ENCODE measurements at regions of chr9 and their contacts with region 1.

Region 1: DNA sequence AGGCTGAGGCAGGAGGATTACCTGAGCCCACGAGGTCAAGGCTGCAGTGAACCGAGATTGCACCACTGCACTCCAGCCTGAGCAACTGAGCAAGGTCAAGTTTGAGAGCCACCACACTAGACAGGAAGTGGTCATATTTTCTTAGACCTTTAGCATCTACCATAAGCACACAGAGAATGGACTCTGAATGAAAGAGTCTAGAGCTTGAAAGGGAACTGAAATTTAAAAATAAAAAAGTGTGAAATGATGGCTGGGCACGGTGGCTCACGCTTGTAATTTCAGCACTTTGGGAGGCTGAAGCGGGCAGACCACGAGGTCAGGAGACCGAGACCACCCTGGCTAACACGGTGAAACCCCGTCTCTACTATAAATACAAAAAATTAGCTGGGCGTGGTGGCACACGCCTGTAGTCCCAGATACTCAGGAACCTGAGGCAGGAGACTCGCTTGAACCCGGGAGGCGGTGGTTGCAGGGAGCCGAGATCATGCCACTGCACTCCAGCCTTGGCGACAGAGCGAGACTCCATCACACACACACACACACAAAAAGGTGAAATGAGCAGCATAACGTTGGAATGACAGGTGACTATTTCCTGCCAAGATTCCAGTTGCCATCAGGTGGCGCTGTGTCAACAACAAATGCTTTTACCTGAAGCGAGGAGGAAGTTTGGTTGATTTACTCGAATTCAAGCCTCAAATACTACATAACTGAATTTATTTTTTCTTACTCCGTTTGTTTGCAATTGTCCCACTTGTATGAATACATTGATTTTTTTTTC is 21.3 kb upstream of the AK3 start:
- DNase-seq: peak; percentile 60
- CTCF ChIP-seq: peak; percentile 88

Region 2: DNA sequence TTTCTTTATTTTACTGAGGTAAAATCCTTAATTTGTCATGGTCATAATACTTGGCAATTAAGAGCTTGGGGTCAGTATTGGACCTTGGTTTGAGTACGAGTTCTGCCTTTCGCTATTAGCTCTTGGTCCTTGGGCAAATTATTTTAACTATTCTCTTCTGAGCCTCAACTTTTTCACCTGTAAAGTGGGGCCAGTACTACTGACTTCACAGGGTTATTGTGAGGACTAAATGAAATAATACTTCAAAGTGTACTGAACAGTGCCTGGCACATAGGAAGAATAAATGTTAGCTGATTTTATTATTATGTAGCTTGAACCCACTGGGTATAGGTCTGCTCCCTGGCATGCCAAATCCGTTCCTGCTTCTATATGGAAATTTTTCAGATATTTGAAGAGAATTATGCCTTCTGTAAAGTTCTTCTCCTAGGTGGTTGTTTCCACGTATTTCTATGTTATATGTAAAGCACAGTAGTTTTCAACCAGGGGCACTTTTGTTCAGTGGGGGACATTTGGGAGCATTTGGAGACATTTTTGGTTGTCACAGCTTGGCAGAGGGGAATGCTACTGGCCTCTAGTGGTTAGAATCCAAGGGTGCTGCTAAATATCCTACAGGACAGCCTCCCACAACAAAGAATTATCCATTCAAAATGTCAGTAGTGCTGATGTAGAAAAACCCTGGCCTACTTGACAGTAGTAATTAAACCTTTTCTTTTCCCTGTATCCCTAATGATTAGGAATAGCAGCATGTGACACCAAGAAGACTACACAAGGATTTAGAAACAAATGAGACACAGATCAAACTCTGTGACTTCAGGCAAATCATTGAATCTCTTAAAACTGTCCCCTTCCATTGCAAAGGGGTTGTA is 34.9 kb after region 1 on chr9:
- CTCF ChIA-PET with region 1: interaction called, 10 read pairs
- POLR2A ChIA-PET with region 1: no interaction called
- DNase-seq: peak; percentile 24
- CTCF ChIP-seq: peak; percentile 60

Region 3: DNA sequence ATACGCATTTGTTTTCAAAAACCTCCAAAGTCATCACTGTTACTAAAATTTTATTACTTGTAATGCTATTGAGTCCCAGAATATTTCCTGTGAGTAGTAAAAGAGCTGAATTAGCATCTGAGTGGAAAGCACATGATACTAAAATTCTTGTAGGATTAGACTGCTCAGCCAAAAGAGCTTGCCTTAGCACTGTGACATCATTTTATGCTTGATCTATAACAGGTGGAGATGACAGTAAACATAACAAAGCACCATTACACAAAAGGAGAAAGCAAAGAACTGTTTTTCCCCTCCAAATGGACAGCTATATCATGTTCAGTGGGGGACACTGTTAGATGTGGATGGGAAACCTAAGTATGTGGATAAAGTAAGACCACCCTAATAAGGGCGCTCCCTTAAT is 216.9 kb after region 1 on chr9:
- CTCF ChIA-PET with region 1: interaction called, 71 read pairs
- POLR2A ChIA-PET with region 1: no interaction called
- DNase-seq: no peak
- CTCF ChIP-seq: no peak

Region 4: DNA sequence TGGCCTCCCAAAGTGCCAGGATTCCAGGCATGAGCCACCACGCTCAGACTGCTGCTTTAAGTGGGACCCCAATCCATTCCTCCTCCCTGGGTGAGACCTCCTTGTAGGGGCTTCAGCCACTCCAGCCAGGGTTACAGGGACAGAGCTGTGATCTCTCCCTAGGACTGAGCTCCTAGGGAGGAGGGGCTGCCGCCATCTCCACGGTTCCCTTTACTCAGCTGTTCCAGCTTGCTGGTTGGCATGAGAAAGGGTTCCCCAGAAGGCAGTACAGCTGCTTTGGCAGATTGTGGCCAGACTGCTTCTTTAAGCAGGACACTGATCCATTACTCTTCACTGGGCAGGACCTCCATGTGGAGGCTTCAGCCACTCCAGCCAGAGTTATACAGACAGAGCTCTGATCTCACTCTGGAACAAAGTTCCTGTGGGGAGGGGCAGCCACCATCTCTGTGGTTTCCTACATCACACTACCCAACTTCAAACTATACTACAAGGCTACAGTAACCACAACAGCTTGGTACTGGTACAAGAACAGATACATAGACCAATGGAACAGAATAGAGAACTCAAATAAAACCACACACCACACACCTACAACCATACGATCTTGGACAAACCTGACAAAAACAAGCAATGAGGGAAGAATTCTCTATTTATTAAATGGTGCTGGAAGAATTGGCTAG is 416.0 kb after region 1 on chr9:
- CTCF ChIA-PET with region 1: no interaction called
- POLR2A ChIA-PET with region 1: no interaction called
- DNase-seq: no peak
- CTCF ChIP-seq: no peak

Region 5: GRCh38 chr9:5437254-5438216 is 675.2 kb after region 1 on chr9 and contains the start of gene PLGRKT:
- CTCF ChIA-PET with region 1: interaction called, 20 read pairs
- POLR2A ChIA-PET with region 1: no interaction called
- DNase-seq: peak; percentile 90
- CTCF ChIP-seq: peak; percentile 17

Measured in GM10248 (cell line).